BJ (cell line): ENCODE measurements at regions of chr10 and their contacts with region 1.

Region 1: DNA sequence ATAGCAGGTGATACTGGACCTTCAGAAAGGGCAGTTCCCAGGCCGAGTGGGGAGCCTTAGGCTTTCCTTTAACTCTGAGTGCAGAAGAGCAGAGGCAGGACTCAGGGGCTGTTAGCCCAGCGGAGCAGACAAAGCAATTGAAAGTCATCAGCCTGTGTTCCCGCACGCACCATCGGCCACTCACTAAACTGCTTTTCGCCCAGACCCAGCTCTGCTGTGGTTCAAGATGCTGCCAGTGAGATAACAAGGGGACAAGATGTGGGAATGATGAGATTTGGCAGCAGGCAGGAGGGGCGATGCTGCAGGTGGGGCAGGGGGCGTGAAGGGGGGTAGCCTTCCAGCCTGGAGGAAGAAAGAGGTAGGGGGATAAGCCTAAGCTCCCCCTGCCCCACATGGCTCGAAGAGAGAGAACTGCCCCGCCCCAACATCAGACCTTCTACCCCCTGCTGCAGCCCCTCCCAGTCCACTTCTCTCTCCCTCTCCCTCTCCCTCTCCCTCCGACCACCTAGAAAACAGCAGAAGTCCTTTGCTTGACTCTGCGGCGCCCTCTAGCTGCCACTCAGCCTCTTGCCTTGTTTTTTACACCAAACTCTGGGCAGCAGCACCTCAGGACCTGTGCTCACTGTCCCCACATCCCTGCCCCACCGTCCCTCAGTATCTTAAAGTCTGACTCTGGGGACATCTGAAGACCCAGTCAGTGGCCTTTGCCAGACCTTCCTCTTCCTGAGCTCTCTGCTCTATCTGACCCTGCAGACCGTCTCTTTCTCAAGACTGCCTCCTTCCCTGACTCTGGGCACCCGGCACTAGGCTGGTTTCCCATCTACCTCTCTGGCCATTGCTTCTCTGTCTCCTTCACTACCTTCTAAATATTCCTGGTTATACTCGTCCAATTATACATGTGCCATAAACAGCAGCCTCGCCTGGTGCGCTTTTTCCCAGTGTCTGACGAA is 110.5 kb downstream of the C10orf105 start:
- DNase-seq: no peak
- H3K4me3 ChIP-seq: no peak overlapping the region
- H3K27me3 ChIP-seq: peaks cover 5% of the 10 kb centered on the region
- CTCF ChIP-seq: peak; percentile 92

Region 2: DNA sequence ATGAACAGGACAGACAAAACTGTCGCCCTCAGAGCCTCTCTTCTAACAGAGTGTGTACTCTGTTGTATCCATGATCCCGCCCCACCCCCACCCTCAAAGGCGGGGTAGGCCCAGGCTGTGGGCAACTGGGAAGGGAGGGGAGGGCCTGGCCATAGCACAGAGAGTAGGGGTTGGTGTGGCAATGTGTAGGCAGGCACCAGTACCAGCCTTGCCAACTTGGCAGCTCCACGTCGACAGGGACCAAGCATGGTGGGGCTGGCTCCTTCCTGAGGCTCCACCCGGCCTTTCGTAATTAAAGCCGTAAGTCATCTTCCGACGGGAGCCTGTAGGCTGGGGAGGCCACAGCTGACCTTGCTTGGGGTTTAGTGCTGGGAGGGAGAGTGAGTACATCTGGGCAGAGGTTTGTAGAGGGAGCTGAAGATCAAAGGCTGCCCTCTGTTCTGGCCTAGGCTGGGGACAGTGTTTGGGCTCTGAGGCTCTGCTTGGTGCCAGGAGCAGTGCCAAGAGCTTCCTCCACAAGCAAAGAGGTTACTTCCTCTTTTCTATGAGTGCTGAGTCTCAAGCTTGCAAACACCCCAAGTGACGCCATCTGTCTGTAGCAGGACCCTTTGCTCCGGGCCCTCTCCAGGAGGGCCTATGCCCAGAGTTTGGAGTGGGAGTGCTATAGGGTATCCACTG is 11.1 kb before region 1 on chr10:
- CTCF ChIA-PET with region 1: interaction called, 13 read pairs
- POLR2A ChIA-PET with region 1: no interaction called
- DNase-seq: no peak
- H3K4me3 ChIP-seq: no peak overlapping the region
- H3K27me3 ChIP-seq: 0 out of 2 replicates have a peak, but pooled peaks cover 2% of the 10 kb centered on the region
- CTCF ChIP-seq: no peak

Region 3: GRCh38 chr10:71623098-71623985 is 14.2 kb after region 1 on chr10:
- CTCF ChIA-PET with region 1: interaction called, 89 read pairs
- POLR2A ChIA-PET with region 1: no interaction called
- DNase-seq: no peak
- H3K4me3 ChIP-seq: no peak overlapping the region
- H3K27me3 ChIP-seq: peaks cover 5% of the 10 kb centered on the region
- CTCF ChIP-seq: peak; percentile 49; the same call in 1 of the 2 replicates